ENCODE measurements at regions of chr10 and their contacts with region 1.

Region 1: GRCh38 chr10:113045147-113046055 is 95.4 kb downstream of the TCF7L2 start:
- DNase-seq: no peak

Region 2: GRCh38 chr10:112585126-112585525 is 460.3 kb before region 1 on chr10:
- CTCF ChIA-PET with region 1: interaction called, 10 read pairs
- POLR2A ChIA-PET with region 1: no interaction called
- DNase-seq: no peak

Region 3: DNA sequence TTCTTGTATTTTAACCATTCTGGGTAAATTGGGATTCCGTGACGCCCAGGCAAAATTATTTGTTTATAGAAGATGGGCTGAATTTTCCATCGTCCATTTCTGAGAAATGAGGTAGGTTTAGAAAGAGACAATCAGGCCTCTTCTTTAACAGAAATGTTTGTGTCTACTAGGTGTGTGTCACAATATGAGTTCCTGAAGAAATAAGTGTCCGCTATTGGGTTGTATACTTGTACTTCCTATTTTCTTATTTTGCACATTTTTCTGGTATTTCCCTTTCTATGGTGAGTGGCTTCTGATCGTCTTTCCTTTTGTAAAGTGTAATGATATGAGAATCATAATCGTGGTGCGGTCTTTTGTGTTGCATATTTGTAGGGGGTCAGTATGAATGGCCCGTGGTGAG is 11.4 kb before region 1 on chr10:
- CTCF ChIA-PET with region 1: no interaction called
- POLR2A ChIA-PET with region 1: no interaction called
- DNase-seq: no peak

Measured in HEK293T (cell line).